Caco-2 (cell line): ENCODE measurements at regions of chr16 and their contacts with region 1.

Region 1: GRCh38 chr16:74064120-74064735 is 232.4 kb upstream of the PSMD7 start:
- DNase-seq: no peak
- H3K4me3 ChIP-seq: no peak overlapping the region
- H3K4me3 Mint-ChIP-seq: no peak overlapping the region
- H3K27ac Mint-ChIP-seq: no peak overlapping the region
- H3K4me1 ChIP-seq: no peaks in the 10 kb centered on the region
- H3K4me1 Mint-ChIP-seq: no peaks in the 10 kb centered on the region
- H3K27me3 ChIP-seq: no peaks in the 10 kb centered on the region
- H3K27me3 Mint-ChIP-seq: peaks cover 33% of the 10 kb centered on the region
- CTCF ChIP-seq: no peak

Region 2: GRCh38 chr16:74107795-74108618 is 43.8 kb after region 1 on chr16:
- CTCF ChIA-PET with region 1: interaction called, 8 read pairs
- POLR2A ChIA-PET with region 1: no interaction called
- intact Hi-C with region 1: loop called (anchors 2 kb)
- DNase-seq: peak; percentile 56 to 76
- H3K4me3 ChIP-seq: no peak overlapping the region
- H3K4me3 Mint-ChIP-seq: peak overlapping the region; percentile 16
- H3K27ac Mint-ChIP-seq: no peak overlapping the region
- H3K4me1 ChIP-seq: no peaks in the 10 kb centered on the region
- H3K4me1 Mint-ChIP-seq: no peaks in the 10 kb centered on the region
- H3K27me3 ChIP-seq: no peaks in the 10 kb centered on the region
- H3K27me3 Mint-ChIP-seq: peaks cover 7% of the 10 kb centered on the region
- CTCF ChIP-seq: peak; percentile 78 to 86

Region 3: DNA sequence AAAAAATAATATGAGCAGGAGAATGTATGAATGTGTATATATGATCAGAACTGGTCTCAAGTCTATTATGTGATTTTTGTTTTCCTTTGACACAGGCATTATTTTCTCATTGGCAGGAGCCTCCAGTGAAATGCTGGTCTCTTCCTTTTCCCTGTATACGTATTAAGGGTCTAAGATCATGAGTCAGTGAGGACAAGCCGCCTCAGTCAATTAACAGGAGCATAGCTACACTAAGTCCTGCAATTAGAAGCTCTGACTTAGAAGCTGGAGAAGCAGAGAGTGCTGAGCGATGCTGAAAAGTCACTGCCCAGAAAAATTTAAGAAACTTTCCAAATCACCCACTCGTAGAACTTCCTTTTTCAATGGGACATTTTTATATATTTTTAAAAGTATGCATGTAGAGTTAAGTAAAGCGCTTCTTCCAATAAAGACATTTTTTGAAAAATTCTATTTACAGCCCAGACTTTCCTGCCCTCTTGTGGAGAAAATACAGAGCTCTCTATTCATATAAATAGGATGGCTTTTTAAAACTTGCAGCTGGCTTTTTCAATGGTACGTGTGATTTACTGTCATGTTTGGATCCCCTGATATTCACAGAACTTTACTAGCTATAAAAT is 162.2 kb after region 1 on chr16:
- CTCF ChIA-PET with region 1: interaction called, 12 read pairs
- POLR2A ChIA-PET with region 1: no interaction called
- intact Hi-C with region 1: loop called (anchors 1 kb)
- DNase-seq: no peak
- H3K4me3 ChIP-seq: no peak overlapping the region
- H3K4me3 Mint-ChIP-seq: no peak overlapping the region
- H3K27ac Mint-ChIP-seq: no peak overlapping the region
- H3K4me1 ChIP-seq: no peaks in the 10 kb centered on the region
- H3K4me1 Mint-ChIP-seq: no peaks in the 10 kb centered on the region
- H3K27me3 ChIP-seq: peaks cover 1% of the 10 kb centered on the region; the same call in 1 of the 2 replicates
- H3K27me3 Mint-ChIP-seq: peaks cover 21% of the 10 kb centered on the region
- CTCF ChIP-seq: peak; percentile 55 to 58